ENCODE measurements at regions of chr10 and their contacts with region 1.

Region 1: GRCh38 chr10:18104223-18104872 is 35.9 kb upstream of the CACNB2 start:
- DNase-seq: peak; percentile 74
- ATAC-seq: no peak
- H3K4me3 Mint-ChIP-seq: no peak overlapping the region
- H3K27ac Mint-ChIP-seq: no peak overlapping the region
- H3K4me1 Mint-ChIP-seq: no peaks in the 10 kb centered on the region
- H3K27me3 Mint-ChIP-seq: peaks cover 3% of the 10 kb centered on the region

Region 2: DNA sequence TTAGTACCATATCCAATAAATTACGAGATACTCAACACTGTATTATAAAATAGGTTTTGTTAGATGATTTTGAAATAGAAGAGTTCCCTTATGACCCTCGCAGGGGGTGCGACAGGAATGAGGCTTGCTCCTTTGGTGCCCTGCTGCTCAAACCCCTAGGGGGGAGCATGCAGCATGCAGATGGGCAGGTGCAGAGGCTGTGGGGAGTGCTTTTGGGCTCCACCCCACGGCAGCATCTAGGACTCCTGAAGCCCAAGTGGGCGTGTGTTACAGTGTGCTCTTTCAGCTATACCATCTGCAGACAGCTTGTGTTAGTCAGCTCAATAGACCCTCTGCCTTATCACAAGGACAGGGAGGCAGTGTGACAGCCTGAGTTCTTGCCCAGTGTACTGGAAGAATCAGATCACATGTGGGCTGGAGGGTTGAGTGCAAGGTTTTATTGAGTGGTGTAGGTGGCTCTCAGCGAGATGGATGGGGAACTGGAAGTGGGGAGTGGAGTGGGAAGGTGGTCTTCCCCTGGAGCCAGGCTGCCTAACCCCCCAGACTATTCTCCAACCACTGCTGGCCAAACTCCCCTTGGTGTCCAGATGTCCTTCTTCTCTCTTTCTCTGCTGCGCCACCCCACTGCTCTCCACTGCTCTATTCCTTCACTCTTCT is 298.3 kb before region 1 on chr10:
- CTCF ChIA-PET with region 1: no interaction called
- POLR2A ChIA-PET with region 1: no interaction called
- intact Hi-C with region 1: loop called in 1 of 2 experiments (anchors 1 kb)
- DNase-seq: peak; percentile 69
- ATAC-seq: peak; percentile 93
- H3K4me3 Mint-ChIP-seq: no peak overlapping the region
- H3K27ac Mint-ChIP-seq: no peak overlapping the region
- H3K4me1 Mint-ChIP-seq: peaks cover 17% of the 10 kb centered on the region
- H3K27me3 Mint-ChIP-seq: peaks cover 20% of the 10 kb centered on the region

Region 3: GRCh38 chr10:17847585-17848296 is 256.6 kb before region 1 on chr10:
- CTCF ChIA-PET with region 1: no interaction called
- POLR2A ChIA-PET with region 1: no interaction called
- intact Hi-C with region 1: loop called in 1 of 2 experiments (anchors 10 kb)
- DNase-seq: no peak
- ATAC-seq: peak; percentile 19
- H3K4me3 Mint-ChIP-seq: no peak overlapping the region
- H3K27ac Mint-ChIP-seq: no peak overlapping the region
- H3K4me1 Mint-ChIP-seq: no peaks in the 10 kb centered on the region
- H3K27me3 Mint-ChIP-seq: peaks cover 3% of the 10 kb centered on the region

Region 4: GRCh38 chr10:17910125-17910789 is 194.1 kb before region 1 on chr10:
- CTCF ChIA-PET with region 1: no interaction called
- POLR2A ChIA-PET with region 1: no interaction called
- intact Hi-C with region 1: loop called in 1 of 2 experiments (anchors 10 kb)
- DNase-seq: peak; percentile 26
- ATAC-seq: no peak
- H3K4me3 Mint-ChIP-seq: no peak overlapping the region
- H3K27ac Mint-ChIP-seq: no peak overlapping the region
- H3K4me1 Mint-ChIP-seq: no peaks in the 10 kb centered on the region
- H3K27me3 Mint-ChIP-seq: peaks cover 2% of the 10 kb centered on the region